ENCODE measurements at regions of chr9 and their contacts with region 1.

Region 1: GRCh38 chr9:89999534-90000370 is 394.9 kb downstream of the GADD45G start:
- DNase-seq: peak in 1 of 2 donors; percentile 82
- H3K4me3 ChIP-seq: peak overlapping the region; percentile 43 to 61
- H3K27ac ChIP-seq: peak overlapping the region; percentile 78 to 80
- H3K4me1 ChIP-seq: peaks cover 24 to 37% of the 10 kb centered on the region in 2 donors
- H3K27me3 ChIP-seq: no peaks in the 10 kb centered on the region
- CTCF ChIP-seq: no peak

Region 2: DNA sequence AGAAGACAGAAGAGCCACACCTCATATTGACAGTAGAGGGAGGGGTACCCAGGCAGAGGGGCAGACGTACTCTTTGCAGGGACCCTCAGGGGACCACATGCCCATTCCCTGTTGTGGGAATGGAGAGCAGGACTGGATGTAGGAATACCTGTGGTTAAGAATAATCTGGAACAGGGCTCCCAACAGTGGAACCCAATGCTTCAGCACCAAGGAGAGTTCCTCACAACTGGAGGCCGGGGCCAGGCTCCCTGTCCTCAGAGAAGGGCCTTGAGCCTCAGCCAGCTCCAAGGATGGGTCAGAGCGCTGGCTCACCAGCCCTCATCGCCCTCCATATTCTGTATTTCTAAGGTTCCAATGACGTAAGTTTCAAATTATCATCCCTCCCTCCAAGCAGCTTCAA is 813.8 kb before region 1 on chr9:
- intact Hi-C with region 1: no loop called
- DNase-seq: no peak
- H3K4me3 ChIP-seq: no peak overlapping the region
- H3K27ac ChIP-seq: no peak overlapping the region
- H3K4me1 ChIP-seq: no peaks in the 10 kb centered on the region
- H3K27me3 ChIP-seq: no peaks in the 10 kb centered on the region
- CTCF ChIP-seq: no peak

Region 3: GRCh38 chr9:89933578-89933977 is 66.2 kb before region 1 on chr9:
- intact Hi-C with region 1: loop called (anchors 2 kb)
- DNase-seq: peak in 1 of 2 donors; percentile 74
- H3K4me3 ChIP-seq: no peak overlapping the region
- H3K27ac ChIP-seq: peak overlapping the region; percentile 35 to 45
- H3K4me1 ChIP-seq: peaks cover 3 to 12% of the 10 kb centered on the region in 2 donors
- H3K27me3 ChIP-seq: no peaks in the 10 kb centered on the region
- CTCF ChIP-seq: no peak

Measured in ascending aorta (tissue), 2 donors.